ENCODE measurements at regions of chr7 and their contacts with region 1.

Region 1: GRCh38 chr7:35906191-35906908 is 105.5 kb downstream of the SEPTIN7 start:
- DNase-seq: peak in 1 of 3 donors; percentile 26
- ATAC-seq: peak; percentile 79 to 90
- H3K4me3 ChIP-seq: no peak overlapping the region
- H3K27ac ChIP-seq: no peak overlapping the region
- H3K4me1 ChIP-seq: peaks cover 3% of the 10 kb centered on the region
- H3K27me3 ChIP-seq: no peaks in the 10 kb centered on the region

Region 2: DNA sequence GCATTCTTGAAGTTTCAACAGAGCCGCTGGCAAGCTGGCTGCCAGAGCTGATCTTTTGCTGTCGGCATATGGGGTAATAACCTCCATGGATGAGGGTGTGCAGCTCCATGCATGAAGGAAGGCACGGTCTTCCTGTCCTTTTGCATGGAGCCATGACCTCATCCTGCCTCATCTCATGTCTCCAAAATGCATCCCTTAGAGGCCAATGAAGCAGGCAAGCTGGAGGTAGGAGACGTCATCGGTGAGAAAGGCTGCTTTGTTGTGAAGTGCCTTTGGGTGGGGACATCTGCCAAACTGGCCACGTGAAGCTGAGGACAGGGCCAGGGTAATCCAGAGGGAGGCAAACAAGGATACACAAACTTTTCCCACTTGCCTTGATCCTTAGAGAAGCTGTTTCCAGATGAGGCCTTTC is 490.9 kb before region 1 on chr7:
- intact Hi-C with region 1: no loop called
- DNase-seq: peak; percentile 89 to 94 (median 92)
- ATAC-seq: peak; percentile 90 to 93
- H3K4me3 ChIP-seq: no peak overlapping the region
- H3K27ac ChIP-seq: peak overlapping the region; percentile 21
- H3K4me1 ChIP-seq: peaks cover 3% of the 10 kb centered on the region
- H3K27me3 ChIP-seq: no peaks in the 10 kb centered on the region

Region 3: GRCh38 chr7:35707422-35707821 is 198.9 kb before region 1 on chr7:
- intact Hi-C with region 1: loop called (anchors 2 to 5 kb)
- DNase-seq: no peak
- ATAC-seq: no peak
- H3K4me3 ChIP-seq: no peak overlapping the region
- H3K27ac ChIP-seq: no peak overlapping the region
- H3K4me1 ChIP-seq: no peaks in the 10 kb centered on the region
- H3K27me3 ChIP-seq: no peaks in the 10 kb centered on the region

Region 4: DNA sequence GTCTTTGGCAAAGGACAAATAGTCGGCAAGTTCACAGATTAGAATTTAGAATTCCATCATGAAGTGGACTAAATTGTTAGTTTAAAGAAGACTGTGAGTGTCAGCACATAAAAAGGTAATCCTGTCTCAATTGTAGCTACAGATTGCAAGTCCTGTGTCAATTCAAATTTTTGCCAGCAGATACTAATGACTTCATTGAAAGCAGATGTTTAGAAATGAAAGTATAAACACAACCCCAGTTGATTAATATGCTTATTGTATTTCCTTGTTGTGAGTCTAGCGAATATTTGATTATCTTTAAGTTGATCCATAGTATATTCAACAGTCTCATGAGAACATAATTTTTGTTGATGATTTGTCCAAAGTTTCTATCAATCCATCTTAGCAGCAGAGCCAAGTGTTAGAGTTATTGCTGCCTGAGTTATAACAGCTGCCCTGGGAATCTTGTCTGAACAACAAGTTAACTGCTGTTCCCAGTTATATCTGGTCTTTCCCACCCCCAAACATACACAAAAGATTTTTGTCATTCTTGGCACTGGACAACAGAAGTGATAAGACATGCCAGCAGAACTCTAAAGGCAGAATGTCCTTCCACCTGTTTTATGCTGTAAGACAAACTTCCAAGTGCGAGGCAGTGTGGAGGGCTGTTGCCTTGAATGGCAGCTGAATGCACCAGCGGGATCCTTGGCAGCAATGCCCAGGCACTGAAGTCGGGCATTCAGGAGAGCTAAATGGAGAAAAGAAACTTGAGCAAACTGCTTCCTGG is 190.1 kb before region 1 on chr7:
- intact Hi-C with region 1: loop called in 1 of 4 experiments (anchors 5 kb)
- DNase-seq: peak in 1 of 3 donors; percentile 49
- ATAC-seq: peak; percentile 72 to 78
- H3K4me3 ChIP-seq: peak overlapping the region; percentile 51
- H3K27ac ChIP-seq: peak overlapping the region; percentile 30
- H3K4me1 ChIP-seq: peaks cover 5% of the 10 kb centered on the region
- H3K27me3 ChIP-seq: no peaks in the 10 kb centered on the region

Region 5: DNA sequence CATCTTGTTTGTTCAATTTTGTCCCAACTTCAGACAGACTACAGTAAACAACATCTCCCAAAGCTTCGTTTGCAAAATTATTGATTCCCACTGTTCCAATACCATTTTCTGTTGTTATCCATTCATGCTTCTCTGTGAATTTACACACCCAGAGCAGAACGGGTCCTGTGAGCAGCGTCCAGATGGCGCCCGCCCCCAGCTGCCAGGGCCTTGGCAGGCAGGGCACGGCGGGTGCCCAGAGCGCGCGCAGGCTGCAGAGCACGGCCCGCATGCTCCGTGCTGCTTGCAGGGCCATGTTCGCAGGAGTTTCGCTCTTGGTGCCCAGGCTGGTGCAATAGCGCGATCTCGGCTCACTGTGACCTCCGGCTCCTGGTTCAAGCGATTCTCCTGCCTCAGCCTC is 138.0 kb before region 1 on chr7:
- intact Hi-C with region 1: no loop called
- DNase-seq: no peak
- ATAC-seq: no peak
- H3K4me3 ChIP-seq: no peak overlapping the region
- H3K27ac ChIP-seq: no peak overlapping the region
- H3K4me1 ChIP-seq: no peaks in the 10 kb centered on the region
- H3K27me3 ChIP-seq: no peaks in the 10 kb centered on the region

Region 6: DNA sequence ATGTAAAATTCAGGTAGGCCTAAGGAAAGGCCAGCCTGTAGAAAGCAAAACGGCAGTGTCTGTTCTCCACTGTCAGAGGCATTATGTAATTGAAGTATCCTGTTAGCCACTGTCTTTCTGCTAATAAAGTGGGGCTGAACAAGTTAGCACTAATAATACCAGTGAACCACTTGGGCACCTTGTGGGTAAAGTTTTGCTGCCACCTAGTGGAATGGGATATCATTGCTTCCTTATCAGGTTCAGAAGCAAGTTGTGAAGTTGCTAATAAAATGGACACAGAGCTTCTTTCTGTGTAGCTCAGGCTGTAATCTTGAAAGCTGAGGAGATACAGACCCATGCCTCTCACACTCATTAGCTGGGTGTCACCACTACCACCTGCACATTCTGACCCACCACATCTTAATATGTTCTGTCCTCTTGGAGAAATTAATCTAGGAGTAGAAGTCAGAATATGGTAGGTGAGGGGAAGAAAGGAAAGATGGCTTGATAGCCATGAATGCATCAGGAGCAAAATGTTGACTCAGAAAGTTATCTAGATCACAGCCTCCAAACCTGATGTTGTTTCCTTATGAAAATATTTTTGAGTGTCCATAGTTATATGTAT is 69.6 kb after region 1 on chr7:
- intact Hi-C with region 1: loop called in 1 of 4 experiments (anchors 10 kb)
- DNase-seq: no peak
- ATAC-seq: peak; percentile 73 to 76
- H3K4me3 ChIP-seq: no peak overlapping the region
- H3K27ac ChIP-seq: no peak overlapping the region
- H3K4me1 ChIP-seq: no peaks in the 10 kb centered on the region
- H3K27me3 ChIP-seq: no peaks in the 10 kb centered on the region

Measured in right cardiac atrium (tissue), 5 donors.